ENCODE measurements at regions of chr3 and their contacts with region 1.

Region 1: DNA sequence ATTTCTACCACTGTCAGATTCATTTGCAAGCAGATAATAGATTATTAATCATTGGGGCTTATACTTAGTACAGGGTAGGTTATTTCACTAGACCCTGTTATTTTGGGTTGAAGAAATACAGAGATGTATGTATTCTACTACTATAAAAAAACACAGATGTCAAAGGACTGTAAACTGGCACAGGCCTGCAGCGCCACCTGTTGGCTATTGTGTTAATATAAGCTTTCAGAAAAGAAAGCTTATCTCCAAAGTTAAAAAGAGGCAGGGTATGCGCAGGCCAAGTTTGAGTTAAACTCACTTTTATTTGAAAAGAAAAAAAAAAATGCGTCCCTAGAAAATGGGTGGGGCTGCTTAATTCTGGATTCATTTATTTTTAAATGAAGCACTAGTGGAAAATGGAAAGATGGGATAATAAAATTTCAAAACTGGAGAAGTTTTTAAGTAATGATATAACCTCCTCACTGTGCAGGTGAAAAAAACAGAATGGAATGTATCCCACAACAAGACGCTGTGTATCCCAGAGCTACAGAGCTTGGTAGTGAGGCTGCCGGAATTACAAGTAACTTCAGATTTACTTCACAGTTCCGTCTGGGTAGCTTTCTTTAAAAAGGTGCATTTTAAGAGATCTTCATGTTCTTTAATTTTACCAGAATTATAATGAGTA is 407.2 kb upstream of the TGFBR2 start:
- DNase-seq: peak; percentile 79
- ATAC-seq: peak; percentile 49
- H3K4me3 Mint-ChIP-seq: no peak overlapping the region
- H3K27ac Mint-ChIP-seq: no peak overlapping the region
- H3K4me1 Mint-ChIP-seq: no peaks in the 10 kb centered on the region
- H3K27me3 Mint-ChIP-seq: no peaks in the 10 kb centered on the region

Region 2: GRCh38 chr3:30042274-30042859 is 156.9 kb before region 1 on chr3:
- CTCF ChIA-PET with region 1: interaction called, 76 read pairs
- POLR2A ChIA-PET with region 1: no interaction called
- DNase-seq: peak; percentile 75
- ATAC-seq: peak; percentile 67
- H3K4me3 Mint-ChIP-seq: no peak overlapping the region
- H3K27ac Mint-ChIP-seq: no peak overlapping the region
- H3K4me1 Mint-ChIP-seq: no peaks in the 10 kb centered on the region
- H3K27me3 Mint-ChIP-seq: peaks cover 15% of the 10 kb centered on the region

Region 3: DNA sequence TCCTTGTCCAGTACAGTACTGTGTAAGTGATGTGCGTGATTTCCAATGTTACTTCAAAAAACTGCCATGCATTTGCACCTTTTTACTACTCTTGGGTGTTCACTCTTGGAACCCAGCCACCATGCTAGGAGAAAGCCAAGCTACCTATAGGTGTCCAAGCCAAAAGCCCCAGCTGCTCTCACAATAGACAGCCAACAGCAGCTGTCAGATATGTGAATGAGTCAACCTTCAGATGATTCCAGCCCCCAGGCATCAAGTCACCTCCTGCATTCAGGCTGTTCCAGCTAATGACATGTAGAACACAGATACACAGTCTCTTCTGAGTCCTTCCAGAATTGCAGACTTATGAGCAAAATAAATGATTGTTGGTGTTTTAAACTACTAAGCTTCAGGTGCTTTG is 10.5 kb before region 1 on chr3:
- CTCF ChIA-PET with region 1: interaction called, 19 read pairs
- POLR2A ChIA-PET with region 1: no interaction called
- DNase-seq: no peak
- ATAC-seq: no peak
- H3K4me3 Mint-ChIP-seq: no peak overlapping the region
- H3K27ac Mint-ChIP-seq: no peak overlapping the region
- H3K4me1 Mint-ChIP-seq: no peaks in the 10 kb centered on the region
- H3K27me3 Mint-ChIP-seq: peaks cover 13% of the 10 kb centered on the region

Region 4: DNA sequence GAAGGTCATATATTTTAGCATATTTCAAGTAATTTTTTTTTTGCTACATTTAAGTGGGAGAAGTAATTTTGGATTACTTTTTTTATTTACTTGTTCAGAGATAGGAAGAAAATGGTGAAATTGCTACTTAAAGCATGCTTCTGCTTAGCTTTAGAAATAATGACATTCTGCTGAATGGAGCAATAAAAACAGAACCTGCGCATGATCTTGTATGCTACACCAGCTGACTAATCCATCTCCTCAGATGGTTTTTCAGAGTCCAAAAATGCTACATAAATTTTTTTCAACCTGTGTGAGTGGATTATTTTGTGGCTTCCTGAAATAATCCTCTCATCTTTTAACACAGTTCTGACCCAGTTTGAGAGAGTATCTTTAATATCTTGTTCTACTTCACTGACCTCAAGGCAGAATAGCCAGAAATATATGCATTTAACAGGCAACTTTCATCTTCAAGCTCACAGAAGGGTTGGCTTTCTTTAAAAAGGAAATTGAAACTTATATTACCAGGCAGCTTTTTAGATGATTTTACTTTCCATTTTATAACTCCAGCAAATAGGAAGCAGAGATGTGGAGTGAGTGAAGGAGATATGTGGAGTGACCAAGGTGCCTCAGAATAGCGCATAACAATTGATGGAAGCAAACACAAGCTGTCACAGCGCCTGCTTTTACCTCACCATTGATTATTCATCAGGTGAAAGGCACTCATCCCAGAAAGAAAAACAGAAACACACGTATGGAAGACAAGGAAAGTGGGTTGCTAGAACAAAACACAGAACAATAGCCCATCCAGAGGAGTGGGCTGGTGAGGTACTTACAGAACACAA is 543.8 kb after region 1 on chr3:
- CTCF ChIA-PET with region 1: interaction called, 44 read pairs
- POLR2A ChIA-PET with region 1: no interaction called
- DNase-seq: no peak
- ATAC-seq: peak; percentile 36
- H3K4me3 Mint-ChIP-seq: peak overlapping the region; percentile 35
- H3K27ac Mint-ChIP-seq: peak overlapping the region; percentile 13
- H3K4me1 Mint-ChIP-seq: peaks cover 19% of the 10 kb centered on the region
- H3K27me3 Mint-ChIP-seq: no peaks in the 10 kb centered on the region

Measured in activated CD8-positive, alpha-beta T cell treated with anti-CD3 and anti-CD28 coated beads, Interleukin-2, amount 10 ng/mL, durations not matched to agents 7 days and 5 days (primary cell).